Heart right ventricle (tissue), 16 donors: ENCODE measurements at regions of chr11 and their contacts with region 1.

Region 1: GRCh38 chr11:42770444-42771065 is 541.2 kb upstream of the API5 start:
- DNase-seq: no peak
- ATAC-seq: no peak
- H3K4me3 ChIP-seq: no peak overlapping the region
- H3K27ac ChIP-seq: no peak overlapping the region
- H3K4me1 ChIP-seq: no peaks in the 10 kb centered on the region
- H3K27me3 ChIP-seq: peaks cover 0 to 14% (median 0%) of the 10 kb centered on the region in 7 donors
- CTCF ChIP-seq: peak; percentile 45 to 78 (median 69)

Region 2: GRCh38 chr11:42593441-42593840 is 177.1 kb before region 1 on chr11:
- intact Hi-C with region 1: no loop called
- DNase-seq: no peak
- ATAC-seq: no peak
- H3K4me3 ChIP-seq: no peak overlapping the region
- H3K27ac ChIP-seq: no peak overlapping the region
- H3K4me1 ChIP-seq: no peaks in the 10 kb centered on the region
- H3K27me3 ChIP-seq: no peaks in the 10 kb centered on the region
- CTCF ChIP-seq: no peak

Region 3: GRCh38 chr11:43010042-43010441 is 239.5 kb after region 1 on chr11:
- intact Hi-C with region 1: loop called in 1 of 10 experiments (anchors 10 kb)
- DNase-seq: no peak
- ATAC-seq: no peak
- H3K4me3 ChIP-seq: no peak overlapping the region
- H3K27ac ChIP-seq: no peak overlapping the region
- H3K4me1 ChIP-seq: no peaks in the 10 kb centered on the region
- H3K27me3 ChIP-seq: peaks cover 0 to 5% (median 0%) of the 10 kb centered on the region in 7 donors
- CTCF ChIP-seq: no peak

Region 4: DNA sequence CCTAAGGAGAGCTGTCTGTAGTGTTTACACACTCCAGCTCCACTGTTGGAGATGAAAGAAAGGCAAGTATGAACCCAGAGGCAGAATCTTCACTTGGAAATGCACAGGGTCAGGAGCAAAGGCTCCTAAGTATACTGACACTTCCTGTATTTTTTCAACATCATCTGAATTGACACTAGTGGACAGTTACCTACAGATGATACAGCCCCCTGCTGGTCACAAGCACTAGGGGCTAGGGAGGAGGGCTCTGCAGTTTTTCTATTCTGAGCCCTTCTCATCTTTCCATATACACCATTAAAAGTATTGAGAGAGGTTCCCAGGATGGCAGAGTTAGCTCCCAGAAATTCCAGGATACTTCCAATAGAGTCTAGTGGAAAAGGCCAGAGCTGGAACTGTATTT is 250.9 kb after region 1 on chr11:
- intact Hi-C with region 1: loop called in 3 of 10 experiments (anchors 5 to 10 kb)
- DNase-seq: no peak
- ATAC-seq: peak in 4 of 8 donors; percentile 24 to 58 (median 34)
- H3K4me3 ChIP-seq: no peak overlapping the region
- H3K27ac ChIP-seq: no peak overlapping the region
- H3K4me1 ChIP-seq: no peaks in the 10 kb centered on the region
- H3K27me3 ChIP-seq: no peaks in the 10 kb centered on the region
- CTCF ChIP-seq: peak in 8 of 9 donors; percentile 5 to 48 (median 38)

Region 5: GRCh38 chr11:43124272-43124935 is 353.8 kb after region 1 on chr11:
- intact Hi-C with region 1: loop called in 2 of 10 experiments (anchors 5 to 10 kb)
- DNase-seq: no peak
- ATAC-seq: no peak
- H3K4me3 ChIP-seq: no peak overlapping the region
- H3K27ac ChIP-seq: peak overlapping the region in 1 of 10 donors; percentile 48
- H3K4me1 ChIP-seq: peaks cover 0 to 8% (median 0%) of the 10 kb centered on the region in 9 donors
- H3K27me3 ChIP-seq: no peaks in the 10 kb centered on the region
- CTCF ChIP-seq: no peak

Region 6: GRCh38 chr11:43130616-43131015 is 360.1 kb after region 1 on chr11:
- intact Hi-C with region 1: loop called in 9 of 10 experiments (anchors 1 to 10 kb)
- DNase-seq: peak in 1 of 2 donors; percentile 4
- ATAC-seq: peak in 6 of 8 donors; percentile 38 to 76 (median 56)
- H3K4me3 ChIP-seq: no peak overlapping the region
- H3K27ac ChIP-seq: no peak overlapping the region
- H3K4me1 ChIP-seq: no peaks in the 10 kb centered on the region
- H3K27me3 ChIP-seq: no peaks in the 10 kb centered on the region
- CTCF ChIP-seq: peak in 6 of 9 donors; percentile 19 to 58 (median 48)

Region 7: GRCh38 chr11:43172477-43172876 is 401.9 kb after region 1 on chr11:
- intact Hi-C with region 1: no loop called
- DNase-seq: no peak
- ATAC-seq: no peak
- H3K4me3 ChIP-seq: no peak overlapping the region
- H3K27ac ChIP-seq: no peak overlapping the region
- H3K4me1 ChIP-seq: no peaks in the 10 kb centered on the region
- H3K27me3 ChIP-seq: no peaks in the 10 kb centered on the region
- CTCF ChIP-seq: no peak

Region 8: GRCh38 chr11:43282607-43283440 is 512.3 kb after region 1 on chr11:
- intact Hi-C with region 1: loop called (anchors 1 to 5 kb)
- DNase-seq: peak in 1 of 2 donors; percentile 43
- ATAC-seq: peak in 2 of 8 donors; percentile 42 to 51
- H3K4me3 ChIP-seq: no peak overlapping the region
- H3K27ac ChIP-seq: no peak overlapping the region
- H3K4me1 ChIP-seq: peaks cover 0 to 10% (median 0%) of the 10 kb centered on the region in 9 donors
- H3K27me3 ChIP-seq: peaks cover 0 to 51% (median 28%) of the 10 kb centered on the region in 7 donors
- CTCF ChIP-seq: peak; percentile 80 to 94 (median 91)